Pancreas (tissue), 10 donors: ENCODE measurements at regions of chr1 and their contacts with region 1.

Region 1: GRCh38 chr1:19153169-19153568 is 56.9 kb downstream of the UBR4 start:
- DNase-seq: no peak
- ATAC-seq: no peak
- H3K4me3 ChIP-seq: no peak overlapping the region
- H3K27ac ChIP-seq: no peak overlapping the region
- H3K4me1 ChIP-seq: no peaks in the 10 kb centered on the region
- H3K27me3 ChIP-seq: no peaks in the 10 kb centered on the region
- CTCF ChIP-seq: no peak

Region 2: DNA sequence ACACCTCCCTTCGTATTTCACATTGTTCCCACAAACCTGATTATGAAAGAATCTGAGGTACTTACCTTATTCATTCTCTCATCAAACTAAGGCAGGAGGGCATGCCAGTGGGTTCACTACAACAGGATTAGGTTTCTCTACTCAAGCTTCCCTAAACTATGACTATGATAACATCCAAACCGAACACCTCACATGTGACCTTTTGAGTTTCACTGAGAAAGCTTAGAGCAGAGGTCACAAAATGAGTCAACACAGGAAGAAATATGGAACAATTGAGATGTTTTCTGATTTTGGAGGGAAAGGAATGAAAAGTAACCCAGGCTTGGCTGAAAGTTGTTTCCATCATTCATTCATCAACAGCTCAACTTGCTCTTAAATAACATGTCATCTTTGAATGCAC is 32.8 kb after region 1 on chr1:
- intact Hi-C with region 1: loop called in 1 of 3 experiments (anchors 5 kb)
- DNase-seq: no peak
- ATAC-seq: no peak
- H3K4me3 ChIP-seq: no peak overlapping the region
- H3K27ac ChIP-seq: no peak overlapping the region
- H3K4me1 ChIP-seq: no peaks in the 10 kb centered on the region
- H3K27me3 ChIP-seq: no peaks in the 10 kb centered on the region
- CTCF ChIP-seq: no peak